ENCODE measurements at regions of chr9 and their contacts with region 1.

Region 1: DNA sequence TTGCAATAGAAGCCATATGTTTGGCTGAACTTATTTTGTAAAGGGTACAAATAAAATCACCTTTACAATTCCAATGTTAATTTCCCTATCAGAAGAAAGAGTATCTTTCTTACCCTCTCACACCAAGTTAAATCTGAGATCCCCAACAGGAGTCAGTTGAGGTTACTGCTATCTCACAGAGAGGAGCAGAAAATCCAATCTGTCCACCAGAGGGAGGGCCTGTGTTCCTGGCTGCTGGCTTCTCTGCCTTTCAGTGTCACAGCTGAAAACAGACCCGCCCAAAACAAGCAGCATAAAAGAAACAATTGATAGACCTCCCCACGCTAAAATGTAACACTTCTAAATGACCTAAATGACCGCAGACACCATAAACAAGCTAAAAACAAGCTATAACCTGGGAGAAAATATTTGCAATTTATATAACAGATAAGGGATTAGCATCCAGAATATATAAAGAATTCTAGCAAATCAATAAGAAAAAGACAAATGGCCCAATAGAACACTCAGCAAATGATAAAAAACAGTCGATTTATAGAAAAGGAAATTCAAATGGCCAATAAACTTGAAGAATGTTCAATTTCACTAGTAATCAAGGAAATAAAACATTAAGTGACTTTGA is 24.5 kb upstream of the MVB12B start:
- DNase-seq: peak; percentile 27 to 41 (median 33)
- H3K4me3 ChIP-seq: no peak overlapping the region
- H3K4me3 Mint-ChIP-seq: no peak overlapping the region
- H3K27ac ChIP-seq: no peak overlapping the region
- H3K27ac Mint-ChIP-seq: no peak overlapping the region
- H3K4me1 ChIP-seq: no peaks in the 10 kb centered on the region
- H3K4me1 Mint-ChIP-seq: peaks cover 2% of the 10 kb centered on the region
- H3K27me3 ChIP-seq: no peaks in the 10 kb centered on the region
- H3K27me3 Mint-ChIP-seq: peaks cover 1 to 4% (median 2%) of the 10 kb centered on the region in 3 donors
- CTCF ChIP-seq: peak; percentile 55

Region 2: GRCh38 chr9:125683486-125683885 is 618.6 kb before region 1 on chr9:
- intact Hi-C with region 1: no loop called
- DNase-seq: no peak
- H3K4me3 ChIP-seq: no peak overlapping the region
- H3K4me3 Mint-ChIP-seq: no peak overlapping the region
- H3K27ac ChIP-seq: no peak overlapping the region
- H3K27ac Mint-ChIP-seq: peak overlapping the region in 1 of 7 donors; percentile 8
- H3K4me1 ChIP-seq: no peaks in the 10 kb centered on the region
- H3K4me1 Mint-ChIP-seq: no peaks in the 10 kb centered on the region
- H3K27me3 ChIP-seq: no peaks in the 10 kb centered on the region
- H3K27me3 Mint-ChIP-seq: no peaks in the 10 kb centered on the region
- CTCF ChIP-seq: no peak

Region 3: DNA sequence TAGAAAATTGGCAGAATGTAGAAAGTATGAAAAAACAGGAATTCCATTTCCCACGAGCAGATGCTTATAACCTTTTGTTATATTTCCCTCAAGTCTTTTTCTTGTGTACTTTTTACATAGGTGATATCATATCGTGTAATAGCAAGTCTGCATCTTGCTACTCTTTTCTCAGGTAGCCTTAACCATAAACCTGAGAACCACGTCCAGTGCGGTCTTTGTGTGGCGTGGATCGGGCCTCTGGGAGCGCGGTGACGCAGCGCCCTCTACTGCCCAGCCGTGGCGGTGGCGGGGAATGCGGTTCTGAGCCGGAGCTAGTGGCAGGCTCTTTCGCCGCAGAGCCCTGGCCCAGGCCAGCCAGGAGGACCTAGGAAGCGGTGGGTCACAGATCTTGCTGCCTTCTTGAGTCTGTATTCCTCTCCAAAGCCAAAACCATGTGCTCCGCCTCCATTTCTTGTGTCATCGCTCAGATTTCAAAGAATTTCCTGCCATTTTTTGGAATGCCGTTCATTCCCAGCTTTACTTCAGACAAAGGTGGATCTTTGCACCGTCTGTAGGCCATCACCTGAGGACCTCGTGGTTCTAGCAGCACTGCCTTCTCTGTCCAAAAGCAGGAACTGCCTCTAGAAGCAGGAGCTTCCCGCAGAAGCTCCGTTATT is 96.4 kb after region 1 on chr9:
- intact Hi-C with region 1: loop called (anchors 2 to 5 kb)
- DNase-seq: peak; percentile 63 to 70 (median 69)
- H3K4me3 ChIP-seq: no peak overlapping the region
- H3K4me3 Mint-ChIP-seq: no peak overlapping the region
- H3K27ac ChIP-seq: no peak overlapping the region
- H3K27ac Mint-ChIP-seq: no peak overlapping the region
- H3K4me1 ChIP-seq: peaks cover 14 to 17% of the 10 kb centered on the region in 2 donors
- H3K4me1 Mint-ChIP-seq: peaks cover 42% of the 10 kb centered on the region
- H3K27me3 ChIP-seq: no peaks in the 10 kb centered on the region
- H3K27me3 Mint-ChIP-seq: no peaks in the 10 kb centered on the region
- CTCF ChIP-seq: peak; percentile 98